ENCODE measurements at regions of chr9 and their contacts with region 1.

Region 1: GRCh38 chr9:108761655-108762347 is 94.0 kb downstream of the ACTL7B start:
- DNase-seq: peak; percentile 34
- H3K4me3 Mint-ChIP-seq: no peak overlapping the region
- H3K27ac Mint-ChIP-seq: no peak overlapping the region
- H3K4me1 Mint-ChIP-seq: no peaks in the 10 kb centered on the region
- H3K27me3 Mint-ChIP-seq: no peaks in the 10 kb centered on the region

Region 2: DNA sequence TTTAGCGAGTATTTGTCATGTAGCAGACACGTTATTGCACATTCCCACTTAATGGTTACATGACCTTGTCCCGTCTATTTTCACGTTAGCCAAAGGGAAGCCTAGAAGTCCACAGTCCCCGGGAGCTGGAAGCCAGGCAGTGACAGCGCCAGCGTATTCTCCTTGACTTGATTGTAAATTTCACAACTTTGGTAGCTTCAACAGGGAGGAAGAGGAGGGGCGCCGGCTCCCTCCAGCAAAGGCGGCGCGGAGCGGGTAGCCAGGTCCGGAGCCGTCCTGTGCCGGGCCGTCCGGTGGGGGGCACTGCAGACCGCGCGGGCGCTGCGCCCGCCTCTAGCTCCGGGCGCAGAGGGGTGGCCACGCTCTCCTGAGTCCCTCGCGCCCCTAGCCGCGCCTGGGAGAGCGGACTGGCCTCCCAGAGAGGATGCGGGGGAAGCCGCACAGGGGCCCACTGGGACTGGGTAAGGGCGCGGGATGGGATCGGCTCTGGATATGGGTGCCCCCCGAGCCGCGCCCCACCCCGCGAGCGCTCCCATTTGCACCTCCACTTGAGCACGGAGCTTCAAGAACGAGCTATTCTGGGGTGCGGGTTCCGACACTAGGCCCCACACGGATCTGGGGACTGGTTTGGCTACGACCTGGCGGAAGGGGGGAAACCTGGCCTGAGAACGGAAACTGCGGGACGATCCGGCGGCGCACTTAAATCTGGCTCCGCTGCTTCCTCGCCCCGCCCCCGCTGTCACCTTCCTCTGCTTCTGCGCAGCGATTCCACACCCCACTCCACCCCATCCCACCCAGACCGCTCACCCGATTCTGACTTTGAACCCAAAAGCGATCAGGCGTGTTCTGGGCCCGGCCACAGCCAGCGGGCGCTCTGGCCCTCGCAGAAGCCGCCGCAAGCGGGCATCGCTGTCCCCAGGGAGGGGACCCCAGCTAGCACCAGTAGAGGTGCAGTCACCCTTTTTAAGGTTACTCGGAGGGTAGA is 1296.0 kb before region 1 on chr9:
- CTCF ChIA-PET with region 1: no interaction called
- POLR2A ChIA-PET with region 1: no interaction called
- intact Hi-C with region 1: loop called (anchors 5 kb)
- DNase-seq: peak; percentile 45
- H3K4me3 Mint-ChIP-seq: no peak overlapping the region
- H3K27ac Mint-ChIP-seq: no peak overlapping the region
- H3K4me1 Mint-ChIP-seq: peaks cover 4% of the 10 kb centered on the region
- H3K27me3 Mint-ChIP-seq: peaks cover 35% of the 10 kb centered on the region

Region 3: GRCh38 chr9:108727580-108728111 is 34.2 kb before region 1 on chr9:
- CTCF ChIA-PET with region 1: no interaction called
- POLR2A ChIA-PET with region 1: no interaction called
- intact Hi-C with region 1: no loop called
- DNase-seq: no peak
- H3K4me3 Mint-ChIP-seq: no peak overlapping the region
- H3K27ac Mint-ChIP-seq: no peak overlapping the region
- H3K4me1 Mint-ChIP-seq: no peaks in the 10 kb centered on the region
- H3K27me3 Mint-ChIP-seq: no peaks in the 10 kb centered on the region

Region 4: GRCh38 chr9:108842610-108843295 is 81.0 kb after region 1 on chr9:
- CTCF ChIA-PET with region 1: no interaction called
- POLR2A ChIA-PET with region 1: no interaction called
- intact Hi-C with region 1: no loop called
- DNase-seq: peak; percentile 45
- H3K4me3 Mint-ChIP-seq: peak overlapping the region; percentile 38
- H3K27ac Mint-ChIP-seq: no peak overlapping the region
- H3K4me1 Mint-ChIP-seq: peaks cover 4% of the 10 kb centered on the region
- H3K27me3 Mint-ChIP-seq: peaks cover 4% of the 10 kb centered on the region